ENCODE measurements at regions of chr2 and their contacts with region 1.

Region 1: DNA sequence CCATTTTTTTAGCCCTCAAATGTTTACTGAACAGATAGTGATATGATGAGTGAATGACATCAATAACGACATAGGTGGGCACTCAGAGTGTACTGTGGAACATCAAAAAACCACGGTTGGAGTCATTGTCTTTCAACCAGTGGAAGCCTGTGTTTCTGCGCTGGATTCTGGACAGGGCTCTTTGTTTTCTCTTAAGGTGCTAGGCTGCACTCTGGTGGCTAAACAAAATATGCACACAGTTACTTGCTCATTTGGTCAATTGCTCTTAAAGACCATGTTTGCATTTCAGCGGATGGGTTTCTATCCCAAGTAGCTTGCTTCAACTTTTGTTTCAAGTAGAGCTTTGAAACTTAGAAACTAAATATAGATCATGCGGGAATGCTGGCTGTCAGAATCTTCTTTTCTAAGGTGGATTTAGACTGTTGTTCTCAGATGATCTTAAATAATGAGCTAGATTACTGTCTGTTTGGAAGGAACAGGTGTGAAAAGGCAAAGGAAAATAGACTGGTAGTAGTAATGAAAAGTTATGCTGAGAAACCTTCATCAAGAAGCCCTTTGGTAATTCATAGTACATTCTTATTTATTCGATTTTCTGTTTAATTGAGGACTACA is 48.5 kb upstream of the LYPD6B start:
- DNase-seq: peak; percentile 48
- H3K4me3 ChIP-seq: no peak overlapping the region
- H3K27ac ChIP-seq: no peak overlapping the region
- H3K4me1 ChIP-seq: no peaks in the 10 kb centered on the region
- H3K27me3 ChIP-seq: no peaks in the 10 kb centered on the region
- CTCF ChIP-seq: peak; percentile 59 to 79 (median 65)
- EP300 ChIP-seq: no peak
- POLR2A ChIP-seq: no peak

Region 2: GRCh38 chr2:147937744-147938349 is 1052.1 kb before region 1 on chr2:
- in situ Hi-C with region 1: loop called in 2 of 4 experiments (anchors 25 kb)
- intact Hi-C with region 1: no loop called
- DNase-seq: no peak
- H3K4me3 ChIP-seq: no peak overlapping the region
- H3K27ac ChIP-seq: no peak overlapping the region
- H3K4me1 ChIP-seq: peaks cover 0 to 13% (median 3%) of the 10 kb centered on the region in 4 donors
- H3K27me3 ChIP-seq: no peaks in the 10 kb centered on the region
- CTCF ChIP-seq: peak; percentile 77 to 88 (median 83)
- EP300 ChIP-seq: no peak
- POLR2A ChIP-seq: no peak

Region 3: DNA sequence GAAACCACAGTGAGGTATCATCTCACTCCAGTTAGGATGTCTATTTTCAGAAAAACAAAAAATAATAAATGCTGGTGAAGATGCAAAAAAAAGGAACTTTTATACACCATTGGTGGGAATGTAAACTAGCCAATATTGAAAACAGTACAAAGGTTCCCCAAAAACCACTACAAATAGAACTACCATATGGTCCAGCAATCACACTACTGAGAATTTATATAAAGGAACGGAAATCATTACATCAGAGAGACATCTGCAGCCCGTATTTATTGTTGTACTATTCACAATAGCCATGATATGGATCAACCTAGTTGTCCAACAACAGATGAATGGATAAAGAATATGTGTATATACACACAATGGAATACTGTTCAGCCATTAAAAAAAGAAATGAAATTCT is 1021.4 kb before region 1 on chr2:
- in situ Hi-C with region 1: loop called in 1 of 4 experiments (anchors 25 kb)
- intact Hi-C with region 1: no loop called
- DNase-seq: no peak
- H3K4me3 ChIP-seq: no peak overlapping the region
- H3K27ac ChIP-seq: no peak overlapping the region
- H3K4me1 ChIP-seq: no peaks in the 10 kb centered on the region
- H3K27me3 ChIP-seq: no peaks in the 10 kb centered on the region
- CTCF ChIP-seq: no peak
- EP300 ChIP-seq: no peak
- POLR2A ChIP-seq: no peak

Region 4: DNA sequence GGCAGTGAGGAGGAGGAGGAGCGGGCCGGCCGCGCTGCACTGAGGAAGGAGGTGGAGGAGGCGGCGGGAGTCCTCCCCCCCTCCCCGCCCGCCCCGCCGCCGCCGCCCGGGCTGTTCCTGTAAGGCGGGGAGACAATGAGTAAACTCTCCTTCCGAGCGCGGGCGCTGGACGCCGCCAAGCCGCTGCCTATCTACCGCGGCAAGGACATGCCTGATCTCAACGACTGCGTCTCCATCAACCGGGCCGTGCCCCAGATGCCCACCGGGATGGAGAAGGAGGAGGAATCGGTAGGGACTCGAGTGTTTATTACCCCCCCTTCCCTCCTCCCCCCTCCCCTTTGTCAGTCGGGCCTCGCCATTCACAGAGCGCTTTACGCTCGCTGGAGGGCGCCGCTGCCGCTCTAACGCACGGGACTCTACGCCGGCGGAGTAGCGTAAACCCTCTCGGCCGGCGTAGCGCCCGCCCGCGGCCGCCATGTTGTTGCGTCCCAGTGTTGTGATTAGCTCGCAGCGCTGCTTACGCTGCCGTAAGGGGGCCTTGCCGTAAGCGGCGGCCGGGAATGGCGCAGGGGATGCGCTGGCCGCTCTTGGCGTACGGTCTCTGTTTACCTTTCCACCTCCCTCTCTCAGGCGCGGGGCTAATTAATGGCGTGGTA is 345.0 kb before region 1 on chr2:
- in situ Hi-C with region 1: loop called in 1 of 4 experiments (anchors 25 kb)
- intact Hi-C with region 1: no loop called
- DNase-seq: peak; percentile 95
- H3K4me3 ChIP-seq: peak overlapping the region; percentile 66 to 97 (median 82)
- H3K27ac ChIP-seq: peak overlapping the region; percentile 98 to 100 (median 98)
- H3K4me1 ChIP-seq: peaks cover 0 to 24% (median 5%) of the 10 kb centered on the region in 4 donors
- H3K27me3 ChIP-seq: no peaks in the 10 kb centered on the region
- CTCF ChIP-seq: peak; percentile 12 to 58 (median 20)
- EP300 ChIP-seq: no peak
- POLR2A ChIP-seq: peak; percentile 19

Region 5: GRCh38 chr2:149040451-149040850 is 50.5 kb after region 1 on chr2:
- in situ Hi-C with region 1: no loop called
- intact Hi-C with region 1: no loop called
- DNase-seq: peak; percentile 45
- H3K4me3 ChIP-seq: no peak overlapping the region
- H3K27ac ChIP-seq: no peak overlapping the region
- H3K4me1 ChIP-seq: peaks cover 0 to 7% (median 2%) of the 10 kb centered on the region in 4 donors
- H3K27me3 ChIP-seq: peaks cover 19% of the 10 kb centered on the region
- CTCF ChIP-seq: peak; percentile 13 to 45 (median 21)
- EP300 ChIP-seq: no peak
- POLR2A ChIP-seq: no peak

Region 6: DNA sequence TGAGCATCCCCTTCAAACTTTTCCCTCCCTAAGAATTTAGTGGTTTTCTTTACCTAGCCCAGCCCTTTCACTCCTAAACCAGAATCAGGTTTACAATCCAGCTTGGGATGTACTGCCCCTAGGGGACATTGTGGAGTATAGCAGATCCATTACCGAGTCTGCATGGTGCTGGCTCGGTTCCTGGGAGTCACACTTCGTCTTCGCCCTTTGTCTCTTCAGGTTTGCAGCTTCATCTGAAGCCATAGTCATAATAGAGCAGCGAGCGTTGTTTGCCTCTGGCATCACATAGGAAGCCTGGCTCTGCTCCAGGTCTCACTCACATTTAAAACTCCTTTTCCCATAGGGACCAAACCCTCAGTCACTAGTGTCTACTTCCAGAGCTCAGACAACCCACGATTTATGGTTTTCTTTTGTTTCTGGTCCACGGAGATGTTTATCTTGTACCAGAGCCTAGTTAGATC is 323.6 kb after region 1 on chr2:
- in situ Hi-C with region 1: no loop called
- intact Hi-C with region 1: no loop called
- DNase-seq: peak; percentile 37
- H3K4me3 ChIP-seq: no peak overlapping the region
- H3K27ac ChIP-seq: no peak overlapping the region
- H3K4me1 ChIP-seq: peaks cover 0 to 4% (median 1%) of the 10 kb centered on the region in 4 donors
- H3K27me3 ChIP-seq: no peaks in the 10 kb centered on the region
- CTCF ChIP-seq: peak; percentile 66 to 81 (median 77)
- EP300 ChIP-seq: no peak
- POLR2A ChIP-seq: no peak